IMR-90 (cell line): ENCODE measurements at regions of chr15 and their contacts with region 1.

Region 1: GRCh38 chr15:82985688-82986441 is at the start of gene RAMAC:
- DNase-seq: peak; percentile 95
- ATAC-seq: peak; percentile 97
- H3K4me3 ChIP-seq: peak within 1 kb of the TSS; percentile 63
- H3K27ac ChIP-seq: peak within 1 kb of the TSS; percentile 85
- H3K4me1 ChIP-seq: peaks cover 3% of the 10 kb centered on the region; the same call in 1 of the 2 replicates
- H3K27me3 ChIP-seq: no peaks in the 10 kb centered on the region
- CTCF ChIP-seq: no peak
- POLR2A ChIP-seq: peak; percentile 39; the same call in 1 of the 2 replicates
- RAD21 ChIP-seq: no peak
- total RNA-seq, gene RAMAC: 29.6 and 38.9 TPM in 2 replicates

Region 2: DNA sequence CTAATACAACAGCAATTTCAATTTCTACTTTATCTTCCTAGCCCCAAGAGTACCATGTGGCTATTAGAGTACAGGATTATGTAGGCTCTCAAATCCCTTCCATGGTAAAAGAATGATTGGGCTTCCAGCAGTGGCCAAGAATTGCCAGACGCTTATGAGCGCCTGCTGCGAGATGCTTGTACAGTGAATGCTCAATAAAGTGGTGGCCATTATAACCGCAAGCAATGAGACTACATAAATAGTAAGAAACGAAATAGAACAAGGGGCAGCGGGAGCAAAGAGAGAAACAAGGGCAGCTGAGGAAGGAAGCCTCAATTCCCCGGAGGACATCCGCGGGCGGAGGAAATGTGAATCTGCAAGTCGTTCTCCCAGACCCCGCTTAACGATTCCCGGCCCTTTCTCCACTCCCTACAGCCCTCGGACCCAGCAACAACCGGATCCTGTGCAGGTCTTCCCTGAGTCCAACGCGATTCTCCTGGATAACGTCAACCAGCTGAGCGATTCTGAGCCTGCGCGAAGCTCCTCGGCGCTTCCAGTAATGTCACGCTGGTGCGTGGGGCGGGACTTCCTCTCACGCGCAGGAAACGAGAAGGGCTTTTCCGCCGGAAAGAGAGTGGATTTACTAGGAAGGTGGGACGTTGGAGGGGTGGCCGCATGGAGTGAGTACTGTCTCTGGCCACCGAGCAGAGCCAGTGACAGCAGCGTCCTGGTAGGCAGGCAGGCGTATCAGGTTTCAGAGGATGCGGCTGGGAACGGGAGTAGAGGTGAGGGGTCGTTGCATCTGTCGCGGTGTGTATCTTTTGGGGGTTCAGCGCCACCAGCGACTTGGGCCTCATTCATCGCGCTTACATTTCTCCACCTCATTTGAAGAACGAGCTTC is 235.7 kb before region 1 on chr15:
- CTCF ChIA-PET with region 1: no interaction called
- POLR2A ChIA-PET with region 1: interaction called, 4 read pairs
- dilution Hi-C with region 1: no loop called
- in situ Hi-C with region 1: no loop called
- intact Hi-C with region 1: loop called (anchors 5 kb)
- DNase-seq: peak; percentile 94
- ATAC-seq: peak; percentile 99
- H3K4me3 ChIP-seq: peak overlapping the region; percentile 86
- H3K27ac ChIP-seq: peak overlapping the region; percentile 87
- H3K4me1 ChIP-seq: peaks cover 2% of the 10 kb centered on the region; the same call in 1 of the 2 replicates
- H3K27me3 ChIP-seq: no peaks in the 10 kb centered on the region
- CTCF ChIP-seq: no peak
- POLR2A ChIP-seq: peak; percentile 77
- RAD21 ChIP-seq: no peak

Region 3: DNA sequence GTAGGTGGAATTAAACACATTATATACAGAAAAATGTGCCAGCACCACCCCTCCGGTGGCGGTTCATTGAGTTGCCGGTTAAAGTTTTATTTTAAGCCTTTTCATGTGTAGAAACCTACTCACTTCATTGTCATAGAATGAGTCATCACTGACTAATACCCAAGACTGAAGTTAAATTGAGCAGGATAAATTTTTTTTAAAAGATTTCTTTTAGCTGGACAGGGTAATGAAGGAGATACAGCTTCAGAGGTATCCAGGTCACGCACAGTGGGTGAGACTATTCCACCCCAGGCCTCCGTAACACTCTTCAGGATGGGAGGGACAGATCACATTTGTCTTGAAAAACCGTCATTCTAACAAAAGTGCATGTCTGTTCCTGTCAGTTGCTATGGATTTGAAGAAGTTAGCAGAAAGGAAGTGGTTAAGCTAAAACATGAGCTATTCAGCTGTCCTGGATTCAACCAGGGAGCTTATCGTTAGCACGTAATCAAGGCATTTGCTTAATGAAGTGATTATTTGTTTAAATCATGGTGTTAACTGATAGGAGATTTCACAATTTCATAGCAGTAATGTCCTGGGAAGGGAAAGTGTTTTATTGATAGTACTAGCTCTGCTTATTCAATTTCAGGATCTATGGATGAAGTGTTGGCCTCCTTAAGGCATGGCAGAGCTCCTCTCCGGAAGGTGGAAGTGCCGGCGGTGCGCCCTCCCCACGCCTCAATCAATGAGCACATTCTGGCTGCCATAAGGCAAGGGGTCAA is 153.1 kb before region 1 on chr15:
- CTCF ChIA-PET with region 1: no interaction called
- POLR2A ChIA-PET with region 1: no interaction called
- dilution Hi-C with region 1: no loop called
- in situ Hi-C with region 1: no loop called
- intact Hi-C with region 1: loop called (anchors 5 kb)
- DNase-seq: peak; percentile 93
- ATAC-seq: peak; percentile 93
- H3K4me3 ChIP-seq: no peak overlapping the region
- H3K27ac ChIP-seq: peak overlapping the region; percentile 85
- H3K4me1 ChIP-seq: peaks cover 10% of the 10 kb centered on the region
- H3K27me3 ChIP-seq: no peaks in the 10 kb centered on the region
- CTCF ChIP-seq: no peak
- POLR2A ChIP-seq: no peak
- RAD21 ChIP-seq: no peak

Region 4: DNA sequence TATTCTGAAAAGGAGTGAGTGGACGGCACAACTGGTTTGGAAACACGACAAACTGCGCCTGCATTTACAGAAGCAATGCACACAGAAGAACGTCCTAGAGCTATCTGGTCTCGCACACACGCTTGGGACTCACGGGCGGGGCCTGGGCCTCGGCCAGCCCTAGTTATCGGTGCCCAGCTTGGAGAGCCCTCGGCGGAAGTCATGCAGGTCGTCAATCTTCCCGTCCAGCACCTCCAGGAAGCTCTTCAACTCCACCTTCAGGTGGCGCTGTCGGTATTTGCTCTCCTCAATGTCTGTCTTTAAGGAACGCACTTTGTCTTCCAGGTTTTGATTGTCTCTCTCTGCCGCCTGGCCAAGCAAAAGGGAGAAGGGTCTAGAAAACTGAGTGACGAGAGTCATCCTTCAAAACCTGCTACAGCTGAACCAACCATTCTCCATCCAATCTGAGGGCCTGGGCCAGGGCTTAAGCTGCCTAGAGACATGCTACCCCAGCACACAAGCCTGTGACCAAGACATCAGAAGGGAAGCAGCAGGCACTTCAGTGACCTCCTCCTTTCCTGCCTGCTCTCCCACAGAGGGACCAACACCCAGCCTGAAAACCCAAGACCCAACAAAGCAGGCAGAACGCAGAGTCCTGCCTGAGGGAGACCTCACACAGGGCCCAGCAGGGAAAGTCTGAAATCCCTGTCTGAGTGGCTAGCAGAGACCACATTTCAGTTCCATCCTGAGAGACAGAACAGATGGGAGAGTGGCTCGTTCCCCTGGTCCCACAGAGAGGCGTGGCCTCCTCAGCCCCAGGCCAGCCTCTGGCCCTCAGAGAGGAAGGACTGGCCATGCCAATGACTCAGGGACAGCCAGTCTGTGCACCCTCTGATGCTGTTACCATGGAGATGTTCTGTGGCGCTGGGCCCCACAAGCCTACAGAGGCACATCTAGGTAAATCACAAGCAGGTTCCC is 136.0 kb before region 1 on chr15:
- CTCF ChIA-PET with region 1: interaction called, 4 read pairs
- POLR2A ChIA-PET with region 1: no interaction called
- dilution Hi-C with region 1: no loop called
- in situ Hi-C with region 1: no loop called
- intact Hi-C with region 1: loop called (anchors 5 kb)
- DNase-seq: peak; percentile 74
- ATAC-seq: peak; percentile 55
- H3K4me3 ChIP-seq: no peak overlapping the region
- H3K27ac ChIP-seq: 0 out of 2 replicates have a peak overlapping the region, but pooled peaks have one; percentile 19
- H3K4me1 ChIP-seq: peaks cover 11% of the 10 kb centered on the region; the same call in 1 of the 2 replicates
- H3K27me3 ChIP-seq: no peaks in the 10 kb centered on the region
- CTCF ChIP-seq: peak; percentile 56
- POLR2A ChIP-seq: no peak
- RAD21 ChIP-seq: peak; percentile 59